ENCODE measurements at regions of chr1 and their contacts with region 1.

Region 1: GRCh38 chr1:25971066-25971810 is 26.6 kb downstream of the PAFAH2 start:
- DNase-seq: peak; percentile 37
- ATAC-seq: peak; percentile 90
- H3K4me3 Mint-ChIP-seq: peak overlapping the region; percentile 23
- H3K27ac Mint-ChIP-seq: peak overlapping the region; percentile 83
- H3K4me1 Mint-ChIP-seq: peaks cover 40% of the 10 kb centered on the region
- H3K27me3 Mint-ChIP-seq: no peaks in the 10 kb centered on the region
- CTCF ChIP-seq: no peak

Region 2: DNA sequence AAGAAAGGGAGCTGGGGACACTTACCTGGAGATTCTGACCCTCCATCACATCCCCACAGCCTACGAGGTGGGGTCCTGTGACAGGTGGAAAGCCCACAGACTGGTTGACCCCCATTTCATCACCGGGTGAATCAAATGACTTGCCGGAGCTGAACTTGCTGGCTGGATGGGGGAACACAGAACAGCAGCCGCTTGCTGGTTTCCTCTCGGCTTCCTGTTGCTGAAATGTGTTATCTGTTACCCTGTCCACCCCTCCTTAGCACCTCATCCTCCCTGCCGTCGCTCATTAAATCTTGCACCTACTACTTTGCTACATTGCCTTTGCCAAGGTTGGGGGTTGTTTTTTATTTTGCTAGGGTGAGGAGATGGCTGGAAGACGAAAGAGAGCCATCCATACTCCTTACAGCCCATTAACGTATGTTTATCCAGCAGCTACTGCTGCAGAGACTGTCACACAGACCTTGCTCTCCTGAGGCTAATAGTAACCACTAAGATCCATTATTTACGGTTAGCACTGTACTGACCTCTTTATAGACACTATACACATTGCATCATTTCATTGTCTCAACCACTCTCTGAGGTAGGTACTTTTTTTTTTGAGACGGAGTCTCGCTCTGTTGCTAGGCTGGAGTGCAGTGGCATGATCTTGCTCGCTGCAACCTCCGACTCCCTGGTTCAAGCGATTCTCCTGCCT is 19.6 kb after region 1 on chr1:
- CTCF ChIA-PET with region 1: interaction called, 4 read pairs
- POLR2A ChIA-PET with region 1: interaction called, 14 read pairs
- intact Hi-C with region 1: no loop called
- DNase-seq: peak; percentile 62
- ATAC-seq: peak; percentile 88
- H3K4me3 Mint-ChIP-seq: peak overlapping the region; percentile 84
- H3K27ac Mint-ChIP-seq: peak overlapping the region; percentile 96
- H3K4me1 Mint-ChIP-seq: peaks cover 51% of the 10 kb centered on the region
- H3K27me3 Mint-ChIP-seq: no peaks in the 10 kb centered on the region
- CTCF ChIP-seq: no peak

Measured in activated CD8-positive, alpha-beta T cell treated with anti-CD3 and anti-CD28 coated beads for 36 hours (primary cell).